A673 (cell line): ENCODE measurements at regions of chr10 and their contacts with region 1.

Region 1: GRCh38 chr10:123994417-123995081 is 98.8 kb downstream of the CHST15 start:
- DNase-seq: peak; percentile 80
- H3K4me3 ChIP-seq: peak overlapping the region; percentile 9
- H3K27ac ChIP-seq: no peak overlapping the region
- H3K4me1 ChIP-seq: no peaks in the 10 kb centered on the region
- H3K27me3 ChIP-seq: peaks cover 44% of the 10 kb centered on the region
- CTCF ChIP-seq: peak; percentile 95

Region 2: GRCh38 chr10:124259139-124259825 is 264.7 kb after region 1 on chr10:
- CTCF ChIA-PET with region 1: no interaction called
- POLR2A ChIA-PET with region 1: no interaction called
- intact Hi-C with region 1: loop called (anchors 10 kb)
- DNase-seq: peak; percentile 47
- H3K4me3 ChIP-seq: no peak overlapping the region
- H3K27ac ChIP-seq: no peak overlapping the region
- H3K4me1 ChIP-seq: no peaks in the 10 kb centered on the region
- H3K27me3 ChIP-seq: no peaks in the 10 kb centered on the region
- CTCF ChIP-seq: peak; percentile 64

Region 3: GRCh38 chr10:124403548-124403947 is 409.0 kb after region 1 on chr10:
- CTCF ChIA-PET with region 1: interaction called, 18 read pairs
- POLR2A ChIA-PET with region 1: no interaction called
- intact Hi-C with region 1: no loop called
- DNase-seq: peak; percentile 88
- H3K4me3 ChIP-seq: no peak overlapping the region
- H3K27ac ChIP-seq: no peak overlapping the region
- H3K4me1 ChIP-seq: no peaks in the 10 kb centered on the region
- H3K27me3 ChIP-seq: no peaks in the 10 kb centered on the region
- CTCF ChIP-seq: peak; percentile 70